Activated CD4-positive, alpha-beta T cell treated with anti-CD3 and anti-CD28 coated beads, Interleukin-2, amount 10 ng/mL, durations not matched to agents 24 days and 14 days (primary cell): ENCODE measurements at regions of chr3 and their contacts with region 1.

Region 1: GRCh38 chr3:143167969-143168854 is 48.6 kb downstream of the CHST2 start:
- DNase-seq: no peak
- H3K4me3 Mint-ChIP-seq: peak overlapping the region; percentile 38
- H3K27ac Mint-ChIP-seq: peak overlapping the region; percentile 59
- H3K4me1 Mint-ChIP-seq: peaks cover 75% of the 10 kb centered on the region
- H3K27me3 Mint-ChIP-seq: no peaks in the 10 kb centered on the region

Region 2: GRCh38 chr3:142578327-142579223 is 589.6 kb before region 1 on chr3 and contains the start of gene ATR:
- intact Hi-C with region 1: loop called (anchors 2 kb)
- DNase-seq: peak; percentile 99
- H3K4me3 Mint-ChIP-seq: peak within 1 kb of the TSS; percentile 99
- H3K27ac Mint-ChIP-seq: peak within 1 kb of the TSS; percentile 99
- H3K4me1 Mint-ChIP-seq: peaks cover 42% of the 10 kb centered on the region
- H3K27me3 Mint-ChIP-seq: peaks cover 15% of the 10 kb centered on the region
- total RNA-seq, gene ATR: 34.2 and 35.0 TPM in 2 replicates

Region 3: GRCh38 chr3:143119009-143119914 is 49.0 kb before region 1 on chr3 and contains the start of gene CHST2:
- intact Hi-C with region 1: loop called (anchors 1 kb)
- DNase-seq: peak; percentile 92
- H3K4me3 Mint-ChIP-seq: peak within 1 kb of the TSS; percentile 89
- H3K27ac Mint-ChIP-seq: peak within 1 kb of the TSS; percentile 76
- H3K4me1 Mint-ChIP-seq: peaks cover 29% of the 10 kb centered on the region
- H3K27me3 Mint-ChIP-seq: peaks cover 22% of the 10 kb centered on the region
- total RNA-seq, gene CHST2: 6.1 and 6.4 TPM in 2 replicates

Region 4: DNA sequence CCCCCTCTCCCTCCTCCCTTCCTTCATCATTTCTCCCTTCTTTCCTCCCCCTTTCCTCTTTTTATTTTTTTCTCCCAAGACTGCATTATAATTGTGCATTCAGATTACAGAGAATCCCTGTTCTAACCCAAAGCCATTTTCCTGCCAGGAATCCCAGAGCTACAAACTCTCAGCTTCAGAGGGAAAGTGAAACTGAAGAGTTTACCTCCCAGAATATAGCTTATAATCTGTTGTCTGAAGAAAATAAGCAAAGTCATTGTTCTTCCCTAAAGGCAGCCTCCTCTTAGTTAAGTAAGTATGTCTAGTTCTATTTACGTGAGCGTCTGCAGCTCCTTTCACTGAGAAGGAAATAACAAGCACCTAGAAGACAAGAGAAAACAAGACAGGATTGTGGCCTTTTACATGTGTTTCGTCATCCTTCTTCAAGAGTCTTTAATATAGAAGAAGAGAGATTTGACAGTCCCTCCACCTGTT is 48.5 kb after region 1 on chr3:
- intact Hi-C with region 1: loop called (anchors 5 kb)
- DNase-seq: no peak
- H3K4me3 Mint-ChIP-seq: peak overlapping the region; percentile 71
- H3K27ac Mint-ChIP-seq: peak overlapping the region; percentile 79
- H3K4me1 Mint-ChIP-seq: peaks cover 12% of the 10 kb centered on the region
- H3K27me3 Mint-ChIP-seq: no peaks in the 10 kb centered on the region

Region 5: GRCh38 chr3:143443851-143444331 is 275.7 kb after region 1 on chr3:
- intact Hi-C with region 1: loop called (anchors 2 kb)
- DNase-seq: peak; percentile 74
- H3K4me3 Mint-ChIP-seq: peak overlapping the region; percentile 9
- H3K27ac Mint-ChIP-seq: peak overlapping the region; percentile 23
- H3K4me1 Mint-ChIP-seq: peaks cover 30% of the 10 kb centered on the region
- H3K27me3 Mint-ChIP-seq: peaks cover 2% of the 10 kb centered on the region

Region 6: DNA sequence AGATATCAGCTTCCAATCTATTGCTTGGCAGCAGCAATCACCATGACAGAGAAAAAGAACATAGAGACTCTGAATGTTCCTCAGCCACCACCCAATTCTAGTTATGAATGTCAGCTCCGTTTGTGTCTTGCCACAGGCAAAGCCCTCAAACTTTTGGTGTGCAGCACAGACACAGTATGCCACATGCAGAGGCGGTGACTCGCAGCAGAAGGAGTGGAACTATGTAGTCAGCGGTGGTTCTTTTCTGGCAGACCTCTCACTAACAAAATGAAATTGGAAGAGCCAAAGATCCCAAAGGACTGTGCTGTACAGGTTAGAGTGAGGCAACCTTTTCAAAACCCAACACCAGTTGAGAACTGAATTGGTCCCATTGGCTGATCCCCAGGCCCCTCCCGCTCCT is 459.1 kb after region 1 on chr3:
- intact Hi-C with region 1: loop called (anchors 1 kb)
- DNase-seq: peak; percentile 58
- H3K4me3 Mint-ChIP-seq: no peak overlapping the region
- H3K27ac Mint-ChIP-seq: no peak overlapping the region
- H3K4me1 Mint-ChIP-seq: peaks cover 2% of the 10 kb centered on the region
- H3K27me3 Mint-ChIP-seq: no peaks in the 10 kb centered on the region